GM13977 (cell line): ENCODE measurements at regions of chr21 and their contacts with region 1.

Region 1: GRCh38 chr21:38355992-38356797 is 99.4 kb downstream of the KCNJ15 start:
- DNase-seq: peak; percentile 84
- CTCF ChIP-seq: peak; percentile 98

Region 2: DNA sequence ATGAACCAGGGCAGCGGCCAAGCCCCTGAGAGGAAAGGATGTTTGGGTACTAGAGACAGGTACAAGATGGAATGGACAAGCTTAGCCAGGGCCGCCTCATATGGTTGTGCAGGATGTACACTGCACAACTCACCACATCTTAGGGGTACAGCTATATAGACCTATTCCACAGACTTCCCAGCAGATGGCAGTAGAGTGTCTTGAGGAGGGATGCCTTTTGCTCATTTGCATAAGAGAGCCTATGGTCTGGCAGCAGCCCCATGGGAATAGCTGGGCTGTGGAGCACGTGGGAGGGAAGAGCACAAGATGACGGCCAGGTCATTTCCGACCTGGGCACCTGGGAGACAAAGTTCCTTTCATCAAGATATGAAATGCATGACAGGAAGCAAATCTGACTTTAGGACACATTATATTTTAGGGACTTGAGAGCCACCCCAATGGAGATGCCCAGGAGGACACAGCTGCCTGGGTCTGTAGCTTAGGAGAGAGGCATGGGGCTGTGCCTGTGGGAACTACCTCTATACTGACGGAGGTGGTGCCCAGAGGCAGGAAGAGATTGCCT is 655.5 kb before region 1 on chr21:
- in situ Hi-C with region 1: loop called (anchors 25 kb)
- DNase-seq: peak; percentile 80
- CTCF ChIP-seq: peak; percentile 58

Region 3: GRCh38 chr21:38165466-38166172 is 190.6 kb before region 1 on chr21:
- in situ Hi-C with region 1: loop called (anchors 10 kb)
- DNase-seq: no peak
- CTCF ChIP-seq: no peak

Region 4: DNA sequence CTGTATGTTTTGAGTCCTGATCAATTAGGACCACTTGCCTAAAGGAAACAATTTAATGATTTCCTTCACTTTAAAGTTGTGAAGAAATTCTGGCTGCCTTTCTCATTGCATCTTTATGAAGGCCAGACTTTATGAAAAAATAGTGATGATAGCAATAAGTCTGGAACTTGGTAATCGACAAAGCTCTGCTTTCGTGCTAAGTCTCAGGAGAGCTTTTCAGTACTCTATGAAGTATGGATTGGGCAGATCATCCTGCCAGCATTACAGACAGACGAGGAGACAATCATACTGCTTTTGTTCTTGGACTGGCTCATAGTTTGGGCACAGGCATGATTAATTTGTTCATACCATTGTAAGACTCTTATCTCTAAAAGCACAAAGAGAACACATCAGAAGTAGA is 144.9 kb before region 1 on chr21:
- in situ Hi-C with region 1: loop called (anchors 5 kb)
- DNase-seq: no peak
- CTCF ChIP-seq: no peak

Region 5: DNA sequence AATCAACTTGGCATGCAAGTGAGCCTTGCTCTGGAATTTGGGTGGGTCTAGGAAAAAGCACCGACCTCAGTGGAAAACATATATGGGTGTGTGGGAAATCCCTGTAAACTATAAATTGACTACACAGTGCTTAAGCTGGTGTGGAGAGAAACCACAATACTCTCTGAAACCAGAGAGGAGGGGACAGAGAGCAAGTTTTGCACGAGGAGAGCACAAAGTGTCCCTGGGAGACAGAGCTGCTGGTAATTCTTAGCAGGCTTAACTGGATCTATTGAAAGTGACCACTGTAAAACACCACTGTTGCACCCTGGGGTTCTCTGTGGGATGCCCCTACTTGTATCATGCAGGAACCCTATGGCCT is 86.6 kb before region 1 on chr21:
- in situ Hi-C with region 1: no loop called
- DNase-seq: peak; percentile 57
- CTCF ChIP-seq: no peak

Region 6: GRCh38 chr21:38295997-38296764 is 60.0 kb before region 1 on chr21:
- in situ Hi-C with region 1: no loop called
- DNase-seq: no peak
- CTCF ChIP-seq: no peak

Region 7: GRCh38 chr21:38306433-38307141 is 49.6 kb before region 1 on chr21:
- in situ Hi-C with region 1: no loop called
- DNase-seq: no peak
- CTCF ChIP-seq: no peak